ENCODE measurements at regions of chr1 and their contacts with region 1.

Region 1: GRCh38 chr1:44721485-44722361 is 9.2 kb downstream of the RNU5D-1 start:
- DNase-seq: peak; percentile 99
- ATAC-seq: peak; percentile 91
- H3K4me3 ChIP-seq: no peak overlapping the region
- H3K27ac ChIP-seq: peak overlapping the region; percentile 99
- H3K4me1 ChIP-seq: peaks cover 49% of the 10 kb centered on the region
- H3K27me3 ChIP-seq: no peaks in the 10 kb centered on the region
- CTCF ChIP-seq: peak in 1 of 3 experiments; percentile 16; a peak in 1 of 6 replicates
- EP300 ChIP-seq: no peak
- POLR2A ChIP-seq: peak; percentile 97
- RAD21 ChIP-seq: peak; percentile 18; the same call in 1 of the 2 replicates

Region 2: DNA sequence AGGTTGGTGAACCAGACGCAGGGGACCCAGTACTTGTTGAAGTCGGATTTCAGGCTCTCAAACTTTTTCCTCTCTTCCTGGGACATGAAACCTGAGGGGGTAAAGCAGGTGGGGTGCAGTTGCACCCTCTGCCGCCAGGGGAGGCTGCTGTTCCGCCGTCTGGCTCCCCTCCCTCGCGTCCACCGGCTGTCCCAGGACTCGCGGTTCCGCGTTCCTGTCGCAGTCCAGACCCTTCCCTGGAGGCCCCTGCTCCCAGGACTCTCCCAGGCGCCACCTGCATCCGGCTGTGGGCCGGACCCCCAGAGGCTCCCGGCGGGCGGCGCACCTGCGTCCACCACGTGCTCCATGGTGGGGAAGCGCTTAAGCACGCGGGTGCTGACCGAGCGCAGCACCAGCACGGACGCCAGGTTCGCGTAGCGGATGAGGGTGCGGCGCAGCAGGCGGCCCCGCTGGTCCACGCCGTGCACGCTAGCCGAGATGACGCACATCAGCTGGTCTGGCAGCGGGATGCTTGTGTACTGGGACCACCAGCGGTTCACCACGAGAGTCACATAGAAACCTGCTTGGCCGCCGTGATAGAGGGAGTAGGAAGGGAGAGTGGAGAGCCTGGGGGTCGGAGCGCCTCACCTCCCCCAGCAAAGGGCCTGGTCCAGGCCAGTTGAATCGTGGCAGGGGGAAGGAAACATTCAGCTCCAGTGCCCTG is 64.6 kb after region 1 on chr1:
- CTCF ChIA-PET with region 1: interaction called, 11 read pairs
- POLR2A ChIA-PET with region 1: interaction called, 6 read pairs
- RAD21 ChIA-PET with region 1: interaction called, 3 read pairs
- SMC1A ChIA-PET with region 1: interaction called, 4 read pairs
- in situ Hi-C with region 1: no loop called
- intact Hi-C with region 1: no loop called
- DNase-seq: no peak
- ATAC-seq: peak; percentile 70
- H3K4me3 ChIP-seq: peak overlapping the region; percentile 46; the same call in 1 of the 2 replicates
- H3K27ac ChIP-seq: no peak overlapping the region
- H3K4me1 ChIP-seq: peaks cover 30% of the 10 kb centered on the region
- H3K27me3 ChIP-seq: no peaks in the 10 kb centered on the region
- CTCF ChIP-seq: peak; percentile 85 to 100 (median 99)
- EP300 ChIP-seq: no peak
- POLR2A ChIP-seq: peak; percentile 76
- RAD21 ChIP-seq: peak; percentile 65

Region 3: GRCh38 chr1:44807262-44808062 is 85.7 kb after region 1 on chr1 and contains the start of gene DYNLT4:
- CTCF ChIA-PET with region 1: interaction called, 3 read pairs
- POLR2A ChIA-PET with region 1: interaction called, 34 read pairs
- RAD21 ChIA-PET with region 1: interaction called, 21 read pairs
- SMC1A ChIA-PET with region 1: interaction called, 13 read pairs
- in situ Hi-C with region 1: no loop called
- intact Hi-C with region 1: no loop called
- DNase-seq: peak; percentile 65
- ATAC-seq: peak; percentile 64
- H3K4me3 ChIP-seq: no peak within 1 kb of the TSS
- H3K27ac ChIP-seq: peak within 1 kb of the TSS; percentile 95
- H3K4me1 ChIP-seq: peaks cover 53% of the 10 kb centered on the region
- H3K27me3 ChIP-seq: no peaks in the 10 kb centered on the region
- CTCF ChIP-seq: no peak
- EP300 ChIP-seq: peak in 1 of 2 experiments; percentile 44; a peak in 2 of 4 replicates
- POLR2A ChIP-seq: no peak; the same call in none of the 2 replicates
- RAD21 ChIP-seq: no peak
- polyA plus RNA-seq, gene DYNLT4: not detected

Measured in GM12878 (cell line).